Astrocyte of the cerebellum (primary cell): ENCODE measurements at regions of chr3 and their contacts with region 1.

Region 1: DNA sequence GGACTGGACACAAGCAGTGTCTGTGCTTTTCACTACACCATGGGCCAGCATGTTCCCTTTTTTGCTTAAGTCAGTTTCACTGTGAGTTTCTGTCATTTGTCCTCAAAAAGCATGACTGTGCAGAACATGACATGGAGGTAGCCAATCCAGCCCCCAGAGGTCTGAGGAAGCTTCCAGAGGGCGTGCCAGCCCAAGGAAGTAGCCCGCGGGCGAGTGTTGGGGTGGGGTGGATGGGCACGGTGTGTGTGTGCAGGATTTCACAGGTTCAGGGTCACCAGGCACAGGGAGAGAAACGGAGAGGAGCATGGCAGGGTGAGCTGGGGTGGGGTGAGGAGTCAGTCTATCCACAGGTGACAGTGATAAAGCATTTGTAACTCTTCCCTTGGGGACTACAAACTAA is 7.9 kb upstream of the EEFSEC start:
- DNase-seq: no peak
- H3K4me3 ChIP-seq: no peak overlapping the region
- CTCF ChIP-seq: no peak

Region 2: GRCh38 chr3:128095222-128095703 is 50.1 kb before region 1 on chr3:
- in situ Hi-C with region 1: loop called (anchors 10 kb)
- DNase-seq: peak; percentile 58
- H3K4me3 ChIP-seq: no peak overlapping the region
- CTCF ChIP-seq: peak; percentile 79